AG04449 (cell line): ENCODE measurements at regions of chr2 and their contacts with region 1.

Region 1: GRCh38 chr2:20411361-20411894 is 35.4 kb upstream of the RHOB start:
- DNase-seq: no peak
- H3K4me3 ChIP-seq: no peak overlapping the region
- CTCF ChIP-seq: peak; percentile 86

Region 2: DNA sequence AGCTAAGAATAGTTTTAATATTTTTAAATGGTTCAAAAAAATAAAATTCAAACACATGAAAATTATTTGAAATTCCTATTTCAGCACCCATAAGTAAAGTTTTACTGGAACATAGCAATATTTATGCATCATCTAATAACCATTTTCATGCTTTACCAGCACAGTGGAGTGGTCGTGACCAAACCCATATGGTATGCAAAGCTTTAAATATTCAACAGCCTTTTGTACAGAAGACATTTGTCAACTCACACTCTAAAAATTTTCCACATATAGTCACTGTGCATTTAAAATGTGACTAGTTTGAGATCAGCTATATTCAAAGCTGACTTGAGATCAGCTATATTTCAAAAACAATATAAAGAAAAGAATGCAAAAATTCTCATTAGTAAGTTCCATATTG is 107.0 kb before region 1 on chr2:
- CTCF ChIA-PET with region 1: no interaction called
- POLR2A ChIA-PET with region 1: no interaction called
- DNase-seq: peak; percentile 42
- H3K4me3 ChIP-seq: no peak overlapping the region
- CTCF ChIP-seq: no peak

Region 3: DNA sequence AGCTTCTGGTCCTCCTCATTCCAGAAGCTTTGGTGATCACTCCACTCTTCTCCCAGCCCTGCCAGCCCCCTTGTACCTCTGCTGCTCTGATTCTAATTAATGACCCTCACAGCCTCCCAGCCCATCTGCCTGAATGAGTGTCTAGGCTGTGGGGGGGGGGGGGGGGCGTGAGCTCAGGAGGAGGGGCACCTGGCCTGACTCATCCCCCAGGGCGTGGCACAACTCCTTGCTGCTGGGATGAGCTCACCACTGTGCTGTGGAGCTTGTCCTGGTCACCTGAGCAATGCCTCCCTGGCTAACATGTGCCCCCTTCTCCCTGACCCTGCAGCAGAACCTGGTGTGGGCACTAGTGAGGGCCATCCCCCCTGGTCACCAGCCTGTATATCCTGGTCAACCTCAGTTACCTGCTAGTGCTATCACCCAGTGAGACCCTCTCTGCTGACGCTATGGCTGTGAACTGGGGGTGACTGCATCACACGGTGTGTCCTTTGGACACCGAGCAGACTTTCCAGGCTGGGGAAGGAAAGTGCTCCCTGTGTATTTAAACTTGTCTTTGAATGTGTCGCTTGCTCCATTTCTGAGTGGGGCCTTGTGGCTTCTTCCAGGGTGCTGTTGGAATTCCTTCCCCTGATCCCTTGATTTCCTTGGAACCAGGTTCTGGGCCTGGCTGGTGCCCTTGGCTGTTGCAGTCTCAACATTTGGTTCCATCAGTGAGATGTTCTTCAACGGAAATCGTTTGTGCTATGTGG is 19.3 kb before region 1 on chr2:
- CTCF ChIA-PET with region 1: interaction called, 335 read pairs
- POLR2A ChIA-PET with region 1: interaction called, 3 read pairs
- DNase-seq: no peak
- H3K4me3 ChIP-seq: no peak overlapping the region
- CTCF ChIP-seq: no peak

Region 4: GRCh38 chr2:20430461-20431300 is 19.3 kb after region 1 on chr2:
- CTCF ChIA-PET with region 1: interaction called, 11 read pairs
- POLR2A ChIA-PET with region 1: no interaction called
- DNase-seq: no peak
- H3K4me3 ChIP-seq: no peak overlapping the region
- CTCF ChIP-seq: no peak

Region 5: GRCh38 chr2:20438334-20439192 is 27.1 kb after region 1 on chr2:
- CTCF ChIA-PET with region 1: interaction called, 77 read pairs
- POLR2A ChIA-PET with region 1: no interaction called
- DNase-seq: peak; percentile 46
- H3K4me3 ChIP-seq: no peak overlapping the region
- CTCF ChIP-seq: no peak

Region 6: DNA sequence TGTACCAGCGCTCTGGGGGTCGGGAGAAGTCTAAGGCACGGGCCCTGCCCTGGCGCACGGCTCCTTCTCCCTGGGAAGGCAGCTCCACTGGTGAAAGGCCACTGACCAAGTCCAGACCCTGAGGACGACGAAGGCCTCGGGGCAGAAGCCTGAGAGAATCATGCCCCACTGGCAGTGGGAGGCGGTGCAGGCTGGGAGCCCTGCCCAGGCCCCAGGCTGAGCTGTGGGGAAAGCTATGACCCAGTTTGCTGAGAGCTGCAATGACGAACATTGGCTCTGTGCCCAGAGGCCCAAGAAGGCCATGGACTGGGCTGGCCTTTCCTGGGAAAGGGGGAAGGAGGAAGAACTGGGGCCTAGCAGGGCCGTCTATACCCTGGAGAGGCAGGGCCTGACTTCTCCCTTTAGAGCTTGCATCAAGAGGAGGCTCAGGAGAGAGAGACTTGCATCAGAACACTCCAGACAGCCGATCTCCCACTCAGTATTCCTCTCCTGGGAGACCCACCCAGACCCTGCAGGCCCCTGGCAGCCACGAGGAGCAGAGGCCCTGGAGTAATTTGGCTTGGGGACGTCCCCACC is 206.6 kb after region 1 on chr2:
- CTCF ChIA-PET with region 1: interaction called, 13 read pairs
- POLR2A ChIA-PET with region 1: no interaction called
- DNase-seq: peak; percentile 95
- H3K4me3 ChIP-seq: no peak overlapping the region
- CTCF ChIP-seq: peak; percentile 59